HCT116 (cell line): ENCODE measurements at regions of chr5 and their contacts with region 1.

Region 1: GRCh38 chr5:158174918-158175851 is 316.2 kb upstream of the CLINT1 start:
- DNase-seq: peak; percentile 24
- ATAC-seq: peak; percentile 93
- H3K4me3 ChIP-seq: no peak overlapping the region
- H3K27ac ChIP-seq: no peak overlapping the region
- H3K4me1 ChIP-seq: no peaks in the 10 kb centered on the region
- H3K27me3 ChIP-seq: peaks cover 53% of the 10 kb centered on the region; the same call in 1 of the 2 replicates
- CTCF ChIP-seq: peak; percentile 58 to 87 (median 77)
- POLR2A ChIP-seq: no peak
- RAD21 ChIP-seq: peak; percentile 88

Region 2: GRCh38 chr5:158695595-158696330 is 520.6 kb after region 1 on chr5:
- CTCF ChIA-PET with region 1: interaction called, 3 read pairs
- POLR2A ChIA-PET with region 1: no interaction called
- RAD21 ChIA-PET with region 1: no interaction called
- intact Hi-C with region 1: loop called (anchors 1 kb)
- DNase-seq: peak; percentile 45
- ATAC-seq: peak; percentile 95
- H3K4me3 ChIP-seq: no peak overlapping the region
- H3K27ac ChIP-seq: no peak overlapping the region
- H3K4me1 ChIP-seq: no peaks in the 10 kb centered on the region
- H3K27me3 ChIP-seq: peaks cover 41% of the 10 kb centered on the region; the same call in 1 of the 2 replicates
- CTCF ChIP-seq: peak; percentile 62 to 97 (median 94)
- POLR2A ChIP-seq: no peak
- RAD21 ChIP-seq: peak; percentile 85

Region 3: GRCh38 chr5:158770506-158770905 is 595.3 kb after region 1 on chr5:
- CTCF ChIA-PET with region 1: interaction called, 16 read pairs
- POLR2A ChIA-PET with region 1: no interaction called
- RAD21 ChIA-PET with region 1: no interaction called
- intact Hi-C with region 1: loop called (anchors 2 kb)
- DNase-seq: peak; percentile 6
- ATAC-seq: peak; percentile 93
- H3K4me3 ChIP-seq: no peak overlapping the region
- H3K27ac ChIP-seq: no peak overlapping the region
- H3K4me1 ChIP-seq: no peaks in the 10 kb centered on the region
- H3K27me3 ChIP-seq: peaks cover 19% of the 10 kb centered on the region; the same call in 1 of the 2 replicates
- CTCF ChIP-seq: peak; percentile 25 to 61 (median 55); a peak in 5 of 6 replicates
- POLR2A ChIP-seq: no peak
- RAD21 ChIP-seq: peak; percentile 43; the same call in 1 of the 2 replicates